Activated CD4-positive, alpha-beta memory T cell treated with anti-CD3 and anti-CD28 coated beads for 36 hours (primary cell): ENCODE measurements at regions of chr17 and their contacts with region 1.

Region 1: DNA sequence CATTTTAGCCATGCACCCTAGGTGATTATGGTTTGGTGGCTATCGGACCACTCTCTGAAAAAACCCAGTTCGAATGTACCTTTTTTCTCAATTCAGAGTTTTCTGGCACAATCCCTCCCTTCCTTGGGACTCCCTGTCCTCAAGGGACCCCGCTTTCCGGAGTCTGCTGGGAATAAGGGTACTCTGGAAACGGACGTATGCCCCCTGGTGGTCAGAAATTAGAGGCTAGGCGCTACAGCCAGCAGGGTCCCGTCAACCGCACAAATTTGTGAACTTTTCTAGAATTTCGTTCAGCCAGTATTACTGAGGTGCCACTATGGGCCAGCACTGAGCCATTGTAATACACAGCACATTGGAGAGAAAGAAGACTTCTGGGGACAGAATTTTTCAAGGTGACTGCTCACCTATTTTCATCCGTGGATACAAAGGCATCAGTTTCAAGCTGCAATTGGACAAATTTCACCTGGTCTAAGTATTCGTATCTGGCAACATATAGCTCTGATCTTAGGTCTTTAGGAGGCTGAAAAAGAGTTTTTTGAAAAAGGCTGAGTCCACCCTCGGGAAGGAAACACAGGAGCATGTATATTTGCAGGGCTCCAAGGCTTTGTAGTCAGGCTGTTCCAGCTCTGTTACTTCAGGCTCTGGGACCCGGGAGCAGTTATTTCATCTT is 27.1 kb upstream of the CRYBA1 start:
- DNase-seq: peak; percentile 80
- H3K4me3 Mint-ChIP-seq: no peak overlapping the region
- H3K27ac Mint-ChIP-seq: no peak overlapping the region
- H3K4me1 Mint-ChIP-seq: no peaks in the 10 kb centered on the region
- H3K27me3 Mint-ChIP-seq: no peaks in the 10 kb centered on the region

Region 2: GRCh38 chr17:28951991-28952975 is 267.2 kb before region 1 on chr17:
- CTCF ChIA-PET with region 1: no interaction called
- POLR2A ChIA-PET with region 1: no interaction called
- intact Hi-C with region 1: no loop called
- DNase-seq: peak; percentile 98
- H3K4me3 Mint-ChIP-seq: no peak overlapping the region
- H3K27ac Mint-ChIP-seq: no peak overlapping the region
- H3K4me1 Mint-ChIP-seq: peaks cover 16% of the 10 kb centered on the region
- H3K27me3 Mint-ChIP-seq: no peaks in the 10 kb centered on the region

Region 3: GRCh38 chr17:29124117-29124924 is 95.2 kb before region 1 on chr17:
- CTCF ChIA-PET with region 1: interaction called, 74 read pairs
- POLR2A ChIA-PET with region 1: interaction called, 3 read pairs
- intact Hi-C with region 1: no loop called
- DNase-seq: peak; percentile 60
- H3K4me3 Mint-ChIP-seq: no peak overlapping the region
- H3K27ac Mint-ChIP-seq: no peak overlapping the region
- H3K4me1 Mint-ChIP-seq: no peaks in the 10 kb centered on the region
- H3K27me3 Mint-ChIP-seq: no peaks in the 10 kb centered on the region

Region 4: DNA sequence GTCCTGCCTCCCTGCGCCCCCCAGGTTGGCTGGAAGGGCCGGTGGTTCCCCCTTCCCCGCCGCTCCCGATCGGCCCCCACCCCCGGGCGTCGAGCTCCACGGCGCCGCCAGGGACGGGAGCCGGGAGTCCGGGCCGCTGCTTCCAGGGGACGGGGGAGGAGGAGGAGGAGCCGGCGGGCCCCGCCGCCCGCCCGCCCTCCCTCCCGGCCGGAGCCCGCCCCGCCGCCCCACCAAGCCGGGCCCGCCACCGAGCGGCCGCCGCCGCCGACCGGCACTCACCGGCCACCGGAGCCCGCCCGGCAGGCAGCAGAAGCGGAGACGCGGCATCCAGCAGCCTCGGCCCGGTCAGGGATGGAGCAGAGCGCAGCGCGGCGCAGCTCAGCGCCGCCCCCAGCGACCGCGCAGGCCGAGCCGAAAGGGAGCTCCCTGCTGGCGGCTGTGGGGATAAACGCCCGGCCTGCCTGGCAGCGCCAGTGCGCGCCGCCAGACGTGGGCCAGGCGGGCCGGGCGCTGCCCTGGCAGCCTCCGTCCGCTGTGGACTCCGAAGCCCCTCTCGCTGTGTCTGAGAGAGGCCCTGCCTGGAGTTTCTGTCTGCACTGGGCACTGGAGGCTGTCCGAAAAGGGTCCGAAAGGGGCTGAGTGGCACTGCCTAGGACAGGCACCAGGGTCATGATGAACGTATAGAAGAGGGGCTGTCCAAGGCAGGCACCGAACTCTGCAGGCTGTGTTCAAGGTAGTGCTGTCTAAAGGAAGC is 39.3 kb before region 1 on chr17 and contains the start of gene MYO18A:
- CTCF ChIA-PET with region 1: interaction called, 11 read pairs
- POLR2A ChIA-PET with region 1: no interaction called
- intact Hi-C with region 1: no loop called
- DNase-seq: peak; percentile 86
- H3K4me3 Mint-ChIP-seq: peak within 1 kb of the TSS; percentile 56
- H3K27ac Mint-ChIP-seq: no peak within 1 kb of the TSS
- H3K4me1 Mint-ChIP-seq: peaks cover 36% of the 10 kb centered on the region
- H3K27me3 Mint-ChIP-seq: peaks cover 2% of the 10 kb centered on the region
- total RNA-seq, gene MYO18A: 46.3 to 47.1 TPM

Region 5: GRCh38 chr17:29241015-29241963 is 21.8 kb after region 1 on chr17:
- CTCF ChIA-PET with region 1: interaction called, 11 read pairs
- POLR2A ChIA-PET with region 1: interaction called, 3 read pairs
- intact Hi-C with region 1: no loop called
- DNase-seq: peak; percentile 58
- H3K4me3 Mint-ChIP-seq: no peak overlapping the region
- H3K27ac Mint-ChIP-seq: peak overlapping the region; percentile 23
- H3K4me1 Mint-ChIP-seq: peaks cover 15% of the 10 kb centered on the region
- H3K27me3 Mint-ChIP-seq: no peaks in the 10 kb centered on the region

Region 6: DNA sequence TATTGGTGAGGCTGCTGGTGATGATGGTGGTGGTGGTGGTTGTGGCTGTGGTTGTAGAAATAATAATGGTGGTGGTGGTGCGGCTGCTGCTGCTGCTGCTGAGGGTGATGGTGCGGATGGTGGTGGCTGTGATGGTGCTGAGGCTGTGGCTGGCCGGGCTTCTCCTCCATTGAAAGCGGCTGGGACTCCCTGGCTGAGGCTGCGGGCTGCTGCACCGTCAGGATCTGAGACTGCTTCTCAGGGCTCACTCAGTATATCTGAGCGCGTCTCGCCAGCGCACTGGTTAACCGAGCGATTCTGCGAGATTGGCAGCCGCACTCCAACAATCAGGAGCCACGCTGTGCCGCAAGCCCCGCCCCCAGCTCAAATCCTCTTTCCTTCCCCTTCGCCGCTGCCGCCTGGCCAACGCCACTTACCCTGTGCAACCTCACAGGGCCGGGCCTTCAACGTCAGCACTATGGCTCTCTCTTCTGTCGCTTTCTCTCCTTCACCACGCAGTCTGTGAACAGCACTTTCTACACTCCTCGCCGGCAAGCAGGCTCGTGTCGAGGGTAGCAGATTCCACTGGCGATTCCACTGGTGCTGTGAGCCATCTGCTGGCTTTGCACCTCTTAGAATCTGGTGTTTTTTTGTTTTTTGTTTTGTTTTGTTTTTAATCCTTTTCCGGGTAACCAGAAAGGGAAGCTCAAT is 74.5 kb after region 1 on chr17 and contains the start of gene NUFIP2:
- CTCF ChIA-PET with region 1: interaction called, 17 read pairs
- POLR2A ChIA-PET with region 1: interaction called, 3 read pairs
- intact Hi-C with region 1: loop called (anchors 1 kb)
- DNase-seq: peak; percentile 99
- H3K4me3 Mint-ChIP-seq: peak within 1 kb of the TSS; percentile 99
- H3K27ac Mint-ChIP-seq: peak within 1 kb of the TSS; percentile 96
- H3K4me1 Mint-ChIP-seq: peaks cover 31% of the 10 kb centered on the region
- H3K27me3 Mint-ChIP-seq: no peaks in the 10 kb centered on the region
- total RNA-seq, gene NUFIP2: 45.6 to 56.9 TPM

Region 7: DNA sequence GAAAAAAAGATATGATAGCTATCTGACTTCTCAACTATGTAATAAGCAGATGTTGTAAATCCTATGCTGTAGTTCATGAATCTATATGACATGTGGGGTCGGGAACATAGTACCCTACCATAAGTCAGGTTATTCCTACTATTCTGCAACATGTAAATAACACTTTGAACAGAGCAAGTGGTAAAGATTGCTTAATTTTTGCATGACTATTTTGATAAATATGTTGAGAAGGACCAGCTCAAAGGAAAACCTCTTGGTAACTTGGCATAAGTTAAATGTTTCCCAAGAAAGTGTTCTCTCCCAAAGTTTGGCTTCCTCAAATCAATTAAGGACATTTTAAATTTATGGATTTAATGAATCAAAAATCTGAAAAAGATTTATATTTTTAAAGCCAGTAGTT is 285.2 kb after region 1 on chr17:
- CTCF ChIA-PET with region 1: no interaction called
- POLR2A ChIA-PET with region 1: no interaction called
- intact Hi-C with region 1: no loop called
- DNase-seq: no peak
- H3K4me3 Mint-ChIP-seq: no peak overlapping the region
- H3K27ac Mint-ChIP-seq: no peak overlapping the region
- H3K4me1 Mint-ChIP-seq: no peaks in the 10 kb centered on the region
- H3K27me3 Mint-ChIP-seq: no peaks in the 10 kb centered on the region